A549 (cell line): ENCODE measurements at regions of chr11 and their contacts with region 1.

Region 1: GRCh38 chr11:65274735-65275682 is 13.2 kb downstream of the POLA2 start:
- DNase-seq: peak; percentile 66 to 85
- ATAC-seq: peak; percentile 88 to 89
- H3K4me3 ChIP-seq: no peak overlapping the region
- H3K27ac ChIP-seq: peak overlapping the region; percentile 23 to 69; a peak in 4 of 6 replicates
- H3K4me1 ChIP-seq: peaks cover 48% of the 10 kb centered on the region
- CTCF ChIP-seq: peak; percentile 96
- EP300 ChIP-seq: no peak
- POLR2A ChIP-seq: no peak
- RAD21 ChIP-seq: peak; percentile 99

Region 2: DNA sequence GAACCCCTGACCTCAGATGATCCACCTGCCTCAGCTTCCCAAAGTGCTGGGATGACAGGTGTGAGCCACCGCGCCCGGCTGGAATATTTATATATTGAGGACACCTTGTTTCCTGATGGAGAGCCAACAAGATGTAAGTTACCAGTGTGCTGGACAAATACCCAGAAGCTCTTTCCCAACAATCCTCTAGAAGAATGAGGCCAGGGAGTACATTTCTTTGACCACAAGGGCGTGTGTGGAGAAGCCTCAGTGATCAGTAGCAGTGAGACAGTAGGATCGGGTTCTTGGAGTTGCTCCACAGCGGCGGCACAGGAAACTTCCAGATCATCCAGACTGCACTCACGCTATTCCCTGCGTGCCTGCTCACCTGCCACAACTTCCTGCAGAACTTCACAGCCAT is 23.5 kb before region 1 on chr11:
- CTCF ChIA-PET with region 1: interaction called, 3,090 read pairs
- POLR2A ChIA-PET with region 1: no interaction called
- DNase-seq: no peak
- ATAC-seq: 0 out of 6 replicates have a peak, but pooled peaks of 1 of the 2 experiments have one; percentile 5
- H3K4me3 ChIP-seq: no peak overlapping the region
- H3K27ac ChIP-seq: no peak overlapping the region
- H3K4me1 ChIP-seq: no peaks in the 10 kb centered on the region
- CTCF ChIP-seq: no peak
- EP300 ChIP-seq: no peak
- POLR2A ChIP-seq: no peak
- RAD21 ChIP-seq: no peak

Region 3: DNA sequence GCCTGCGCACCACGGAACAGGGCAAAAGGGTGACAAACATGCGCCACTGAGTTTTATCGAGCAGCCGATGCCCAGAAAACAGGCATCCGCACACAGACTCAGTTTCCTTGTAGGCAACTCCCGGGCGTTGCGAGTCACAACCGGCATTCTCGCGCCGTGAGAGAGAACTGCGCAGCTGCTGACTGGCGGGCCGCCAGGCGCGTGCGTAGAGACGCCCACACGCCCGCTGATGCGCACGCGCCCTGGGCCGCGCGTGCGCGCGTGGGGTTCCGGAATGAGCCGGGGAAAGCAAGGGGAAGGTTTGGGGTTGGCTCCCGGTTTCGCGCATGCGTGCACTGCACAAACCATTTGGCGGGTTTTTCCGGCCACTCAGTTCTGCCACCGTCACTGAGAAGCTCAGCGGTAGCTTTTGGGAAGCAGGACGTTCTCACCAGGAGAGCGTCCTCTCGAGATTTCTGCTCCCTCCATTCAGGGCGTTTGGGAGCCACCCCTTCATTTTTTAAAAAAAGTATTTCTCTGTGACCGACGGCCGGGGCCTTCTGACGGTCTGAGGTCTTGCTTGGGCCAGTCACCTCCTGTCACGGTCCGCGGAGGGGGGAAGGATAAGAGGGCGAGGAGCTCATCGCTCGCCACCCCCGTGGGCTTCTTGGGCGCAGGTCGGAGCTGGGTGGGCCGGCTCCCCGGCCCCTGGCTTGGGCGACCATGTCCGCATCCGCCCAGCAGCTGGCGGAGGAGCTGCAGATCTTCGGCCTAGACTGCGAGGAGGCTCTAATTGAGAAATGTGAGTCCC is 13.2 kb before region 1 on chr11 and contains the start of gene POLA2:
- CTCF ChIA-PET with region 1: interaction called, 3,090 read pairs
- POLR2A ChIA-PET with region 1: interaction called, 5 read pairs
- DNase-seq: peak; percentile 95 to 96
- ATAC-seq: peak; percentile 79 to 94
- H3K4me3 ChIP-seq: peak within 1 kb of the TSS; percentile 77
- H3K27ac ChIP-seq: peak within 1 kb of the TSS; percentile 82 to 93
- H3K4me1 ChIP-seq: peaks cover 11% of the 10 kb centered on the region
- CTCF ChIP-seq: no peak
- EP300 ChIP-seq: no peak
- POLR2A ChIP-seq: peak; percentile 85
- RAD21 ChIP-seq: no peak
- polyA plus RNA-seq, gene POLA2: 52.3 and 55.6 TPM in 2 replicates

Region 4: DNA sequence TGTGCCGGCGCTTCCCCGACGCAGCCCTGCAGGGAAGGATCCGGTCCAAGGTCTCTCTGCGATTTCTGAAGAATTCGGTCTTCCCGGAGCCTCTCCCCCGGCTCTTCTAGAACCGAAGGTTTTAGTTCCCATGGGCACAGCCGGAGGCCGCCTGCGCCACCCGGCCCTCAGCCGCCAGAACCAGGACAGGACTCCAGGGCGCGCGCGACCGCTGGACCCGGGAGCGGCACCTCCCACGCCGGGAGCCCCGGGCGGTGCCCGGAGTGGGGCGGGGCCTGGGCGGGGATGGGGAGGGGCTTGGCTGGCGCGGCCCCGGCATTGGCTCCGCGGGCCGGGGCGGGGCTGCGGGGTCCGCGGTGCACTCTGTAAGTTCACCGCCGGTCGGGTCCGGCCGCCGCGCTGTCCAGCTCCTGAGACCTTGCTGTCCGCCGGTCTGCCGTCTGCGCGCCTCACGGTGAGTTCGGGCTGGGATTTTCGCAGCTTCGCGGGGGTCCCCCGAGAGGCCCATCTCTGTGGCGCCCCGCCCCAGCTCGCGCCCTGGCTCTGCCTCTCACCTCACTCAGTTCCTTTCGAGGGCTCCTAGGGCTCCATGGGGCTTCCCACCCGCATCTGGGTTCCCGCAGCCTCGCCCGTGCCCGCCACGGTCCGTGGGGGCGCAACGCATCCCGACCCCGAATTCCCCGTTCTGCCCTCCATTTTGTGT is 39.6 kb after region 1 on chr11 and contains the start of gene CDC42EP2:
- CTCF ChIA-PET with region 1: interaction called, 3,090 read pairs
- POLR2A ChIA-PET with region 1: interaction called, 62 read pairs
- DNase-seq: peak; percentile 77 to 84
- ATAC-seq: peak; percentile 73 to 88
- H3K4me3 ChIP-seq: peak within 1 kb of the TSS; percentile 99
- H3K27ac ChIP-seq: peak within 1 kb of the TSS; percentile 91
- H3K4me1 ChIP-seq: peaks cover 55% of the 10 kb centered on the region
- CTCF ChIP-seq: no peak
- EP300 ChIP-seq: no peak
- POLR2A ChIP-seq: peak; percentile 70
- RAD21 ChIP-seq: no peak
- polyA plus RNA-seq, gene CDC42EP2: 3.0 and 3.7 TPM in 2 replicates

Region 5: DNA sequence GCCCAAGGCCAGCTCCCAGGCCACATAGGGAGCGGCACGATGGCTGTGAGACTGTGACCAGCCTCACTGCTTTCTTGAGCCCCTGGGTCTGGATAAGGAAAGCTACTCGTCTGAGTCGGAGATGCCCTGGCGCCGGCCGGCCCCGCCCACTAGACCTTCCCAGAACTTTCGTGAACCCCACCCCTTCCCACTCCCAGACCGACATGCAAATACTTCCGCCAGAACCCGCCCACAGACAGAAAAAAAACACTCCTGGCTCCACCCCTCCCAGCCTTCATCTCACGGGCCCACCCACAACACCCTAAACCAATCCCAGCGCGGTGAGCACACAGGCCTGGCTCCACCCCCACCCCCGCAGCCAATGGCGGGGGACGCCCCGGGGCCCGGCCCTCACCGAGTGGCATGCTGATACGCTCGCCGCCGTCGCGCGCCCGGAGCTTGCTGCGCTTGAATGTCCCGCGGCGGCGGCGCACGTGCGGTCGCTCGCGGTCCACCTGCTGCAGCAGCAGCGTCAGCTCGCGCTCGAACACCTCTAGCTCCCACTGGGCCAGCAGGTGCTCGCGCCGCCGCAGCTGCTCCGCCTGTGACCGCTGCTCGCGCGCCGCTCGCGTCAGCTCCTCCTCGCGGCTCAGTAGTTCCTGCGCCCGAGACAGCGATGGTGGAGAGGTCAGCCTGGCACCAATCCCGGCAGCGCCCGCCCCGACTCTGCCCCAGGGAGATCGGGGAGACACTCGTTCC is 332.0 kb after region 1 on chr11:
- CTCF ChIA-PET with region 1: no interaction called
- POLR2A ChIA-PET with region 1: no interaction called
- DNase-seq: peak; percentile 46 to 70
- ATAC-seq: peak in 1 of 2 experiments; percentile 85; a peak in 3 of 6 replicates
- H3K4me3 ChIP-seq: no peak overlapping the region
- H3K27ac ChIP-seq: no peak overlapping the region
- H3K4me1 ChIP-seq: peaks cover 22% of the 10 kb centered on the region; the same call in 1 of the 3 replicates
- CTCF ChIP-seq: no peak
- EP300 ChIP-seq: no peak
- POLR2A ChIP-seq: no peak
- RAD21 ChIP-seq: no peak